Calu3 (cell line): ENCODE measurements at regions of chr10 and their contacts with region 1.

Region 1: GRCh38 chr10:88386821-88387773 is 196.0 kb downstream of the RNLS start:
- DNase-seq: peak; percentile 21
- H3K4me3 Mint-ChIP-seq: peak overlapping the region; percentile 57
- H3K27ac Mint-ChIP-seq: peak overlapping the region; percentile 67
- H3K4me1 Mint-ChIP-seq: no peaks in the 10 kb centered on the region
- H3K27me3 Mint-ChIP-seq: no peaks in the 10 kb centered on the region
- CTCF ChIP-seq: no peak

Region 2: GRCh38 chr10:88114368-88114767 is 272.7 kb before region 1 on chr10:
- CTCF ChIA-PET with region 1: interaction called, 6 read pairs
- intact Hi-C with region 1: loop called (anchors 5 kb)
- DNase-seq: peak; percentile 32
- H3K4me3 Mint-ChIP-seq: no peak overlapping the region
- H3K27ac Mint-ChIP-seq: no peak overlapping the region
- H3K4me1 Mint-ChIP-seq: peaks cover 16% of the 10 kb centered on the region
- H3K27me3 Mint-ChIP-seq: no peaks in the 10 kb centered on the region
- CTCF ChIP-seq: no peak

Region 3: GRCh38 chr10:88243836-88244730 is 143.0 kb before region 1 on chr10:
- CTCF ChIA-PET with region 1: no interaction called
- intact Hi-C with region 1: loop called (anchors 5 kb)
- DNase-seq: peak; percentile 6
- H3K4me3 Mint-ChIP-seq: peak overlapping the region; percentile 39
- H3K27ac Mint-ChIP-seq: no peak overlapping the region
- H3K4me1 Mint-ChIP-seq: peaks cover 9% of the 10 kb centered on the region
- H3K27me3 Mint-ChIP-seq: no peaks in the 10 kb centered on the region
- CTCF ChIP-seq: no peak

Region 4: DNA sequence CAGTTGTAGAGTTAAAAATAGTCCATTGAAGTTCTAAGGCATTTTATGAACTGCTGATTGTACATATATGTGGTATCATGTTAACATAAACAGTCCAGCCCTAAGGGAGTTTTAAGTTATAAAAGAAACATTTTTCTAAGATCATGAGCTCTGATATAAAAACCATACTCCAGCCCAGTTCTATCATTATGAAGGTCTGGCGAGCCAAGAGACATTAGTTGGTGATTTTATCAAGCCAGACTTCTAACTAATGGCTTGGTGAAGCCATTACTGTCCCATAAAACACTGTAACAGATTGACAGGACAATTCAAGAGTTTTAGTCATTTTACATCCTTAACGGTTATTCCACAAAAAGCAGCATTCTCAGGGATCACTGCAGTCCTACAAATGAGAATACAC is 25.6 kb before region 1 on chr10:
- CTCF ChIA-PET with region 1: no interaction called
- intact Hi-C with region 1: loop called (anchors 2 kb)
- DNase-seq: no peak
- H3K4me3 Mint-ChIP-seq: no peak overlapping the region
- H3K27ac Mint-ChIP-seq: no peak overlapping the region
- H3K4me1 Mint-ChIP-seq: no peaks in the 10 kb centered on the region
- H3K27me3 Mint-ChIP-seq: no peaks in the 10 kb centered on the region
- CTCF ChIP-seq: no peak